A549 (cell line): ENCODE measurements at regions of chr19 and their contacts with region 1.

Region 1: GRCh38 chr19:55624109-55625003 is at the start of gene ZNF784:
- DNase-seq: peak; percentile 89 to 96
- ATAC-seq: peak; percentile 74 to 82
- H3K4me3 ChIP-seq: peak within 1 kb of the TSS; percentile 48
- H3K27ac ChIP-seq: peak within 1 kb of the TSS; percentile 89 to 93
- H3K4me1 ChIP-seq: 0 out of 3 replicates have a peak, but pooled peaks cover 7% of the 10 kb centered on the region
- CTCF ChIP-seq: no peak
- EP300 ChIP-seq: no peak
- POLR2A ChIP-seq: peak; percentile 80
- RAD21 ChIP-seq: no peak
- polyA plus RNA-seq, gene ZNF784: 3.5 and 4.1 TPM in 2 replicates

Region 2: GRCh38 chr19:55476100-55476775 is 148.1 kb before region 1 on chr19 and contains the start of gene ZNF628:
- CTCF ChIA-PET with region 1: interaction called, 115 read pairs
- POLR2A ChIA-PET with region 1: interaction called, 16 read pairs
- DNase-seq: peak; percentile 99 to 100
- ATAC-seq: peak; percentile 94
- H3K4me3 ChIP-seq: peak within 1 kb of the TSS; percentile 56
- H3K27ac ChIP-seq: peak within 1 kb of the TSS; percentile 84 to 92
- H3K4me1 ChIP-seq: peaks cover 26% of the 10 kb centered on the region
- CTCF ChIP-seq: no peak
- EP300 ChIP-seq: no peak
- POLR2A ChIP-seq: peak; percentile 26; the same call in 1 of the 2 replicates
- RAD21 ChIP-seq: no peak
- polyA plus RNA-seq, gene ZNF628: 0.32 and 0.48 TPM in 2 replicates

Region 3: DNA sequence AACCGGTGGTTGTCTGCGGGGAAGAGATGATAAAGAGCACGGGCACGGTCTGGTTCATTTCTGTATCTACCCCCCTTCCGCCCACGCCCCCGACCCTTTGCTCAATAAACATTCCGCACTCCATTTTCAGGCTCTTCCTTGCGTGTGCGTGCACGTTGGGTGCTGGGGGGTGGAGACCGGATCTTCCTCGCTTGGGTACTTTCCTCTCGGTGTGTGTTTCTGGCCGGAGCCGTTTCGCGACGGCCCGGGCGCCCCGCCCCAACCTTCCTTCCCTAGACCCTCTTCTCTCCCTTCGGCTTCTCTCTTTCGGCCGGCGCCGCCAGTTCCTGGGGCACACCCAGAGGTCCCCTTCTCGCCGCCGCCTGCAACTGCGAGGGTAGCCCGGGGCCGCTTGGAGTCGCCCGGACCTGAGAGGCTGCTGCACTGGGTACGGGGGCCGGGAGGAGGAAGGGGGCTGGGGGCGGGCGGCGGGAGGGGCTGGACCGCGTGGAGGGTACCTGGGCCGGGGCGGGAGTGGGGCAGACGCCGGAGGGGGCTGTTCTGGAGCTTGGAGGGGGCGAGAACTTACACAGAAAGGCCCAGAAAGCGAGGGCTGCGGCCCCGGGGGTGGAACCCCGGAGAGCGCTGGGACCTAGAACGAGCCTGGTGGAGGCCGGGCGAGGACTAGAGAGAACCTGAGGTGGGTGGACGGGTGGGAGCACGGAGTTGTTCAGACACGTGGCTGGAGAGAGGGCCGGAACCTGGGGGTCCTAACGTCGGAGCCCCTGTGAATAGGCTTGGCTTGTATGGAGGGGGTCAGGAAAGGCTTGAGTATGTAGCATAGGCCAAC is 19.2 kb after region 1 on chr19 and contains the start of gene ZNF581:
- CTCF ChIA-PET with region 1: interaction called, 8 read pairs
- POLR2A ChIA-PET with region 1: interaction called, 12 read pairs
- DNase-seq: peak; percentile 86 to 97
- ATAC-seq: peak; percentile 45 to 65
- H3K4me3 ChIP-seq: peak within 1 kb of the TSS; percentile 63
- H3K27ac ChIP-seq: peak within 1 kb of the TSS; percentile 92 to 97
- H3K4me1 ChIP-seq: peaks cover 38% of the 10 kb centered on the region
- CTCF ChIP-seq: no peak
- EP300 ChIP-seq: no peak
- POLR2A ChIP-seq: peak; percentile 45
- RAD21 ChIP-seq: no peak
- polyA plus RNA-seq, gene ZNF581: 13.9 and 17.1 TPM in 2 replicates

Region 4: DNA sequence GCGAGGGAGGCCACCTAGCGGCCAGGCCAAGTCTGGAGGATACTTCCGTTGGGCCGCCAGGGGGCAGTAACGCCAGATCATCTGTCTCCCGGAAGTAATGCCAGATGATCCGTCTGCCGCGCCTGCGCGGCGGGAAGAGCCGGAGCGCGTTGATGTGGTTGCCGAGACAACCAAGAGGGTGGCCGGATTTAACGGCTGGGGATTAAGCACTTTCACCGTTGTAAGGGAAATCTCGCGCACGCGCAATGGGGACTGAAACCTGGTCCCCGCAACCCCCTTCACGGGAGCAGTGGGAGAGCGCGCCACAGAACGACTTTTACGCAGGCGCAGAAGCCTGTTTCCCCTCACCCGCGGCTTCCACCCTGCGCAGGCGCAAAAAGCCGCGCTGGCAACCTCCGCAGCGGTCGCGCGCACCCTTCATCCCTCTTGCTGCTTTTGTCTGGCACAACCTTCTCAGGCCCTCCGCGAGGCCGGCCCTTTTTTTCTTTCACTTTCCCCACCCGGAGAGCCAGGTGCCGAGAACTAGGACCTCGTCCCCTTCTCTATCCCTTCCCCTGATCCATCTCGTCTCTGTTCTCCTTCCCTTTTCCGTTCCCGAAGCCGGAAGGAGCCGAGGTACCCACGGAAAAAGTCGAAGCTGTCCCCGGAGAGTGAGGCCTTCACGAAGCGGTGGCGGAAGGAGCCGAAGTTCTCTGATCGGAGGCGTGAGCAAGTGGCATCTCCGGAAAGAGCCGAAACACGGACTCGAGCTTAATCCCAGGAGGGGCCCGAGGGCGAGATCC is 29.6 kb after region 1 on chr19:
- CTCF ChIA-PET with region 1: interaction called, 11 read pairs
- POLR2A ChIA-PET with region 1: interaction called, 25 read pairs
- DNase-seq: peak; percentile 98 to 100
- ATAC-seq: peak; percentile 71 to 85
- H3K4me3 ChIP-seq: peak overlapping the region; percentile 68
- H3K27ac ChIP-seq: peak overlapping the region; percentile 96 to 98
- H3K4me1 ChIP-seq: peaks cover 34% of the 10 kb centered on the region
- CTCF ChIP-seq: peak; percentile 100
- EP300 ChIP-seq: no peak
- POLR2A ChIP-seq: peak; percentile 86
- RAD21 ChIP-seq: peak; percentile 59 to 65